MCF 10A (cell line): ENCODE measurements at regions of chr1 and their contacts with region 1.

Region 1: GRCh38 chr1:203906932-203907331 is 45.5 kb downstream of the SNRPE start:
- DNase-seq: peak; percentile 99
- H3K4me3 Mint-ChIP-seq: no peak overlapping the region
- H3K27ac Mint-ChIP-seq: peak overlapping the region; percentile 60
- H3K4me1 Mint-ChIP-seq: peaks cover 19% of the 10 kb centered on the region
- H3K27me3 Mint-ChIP-seq: no peaks in the 10 kb centered on the region
- CTCF ChIP-seq: no peak

Region 2: DNA sequence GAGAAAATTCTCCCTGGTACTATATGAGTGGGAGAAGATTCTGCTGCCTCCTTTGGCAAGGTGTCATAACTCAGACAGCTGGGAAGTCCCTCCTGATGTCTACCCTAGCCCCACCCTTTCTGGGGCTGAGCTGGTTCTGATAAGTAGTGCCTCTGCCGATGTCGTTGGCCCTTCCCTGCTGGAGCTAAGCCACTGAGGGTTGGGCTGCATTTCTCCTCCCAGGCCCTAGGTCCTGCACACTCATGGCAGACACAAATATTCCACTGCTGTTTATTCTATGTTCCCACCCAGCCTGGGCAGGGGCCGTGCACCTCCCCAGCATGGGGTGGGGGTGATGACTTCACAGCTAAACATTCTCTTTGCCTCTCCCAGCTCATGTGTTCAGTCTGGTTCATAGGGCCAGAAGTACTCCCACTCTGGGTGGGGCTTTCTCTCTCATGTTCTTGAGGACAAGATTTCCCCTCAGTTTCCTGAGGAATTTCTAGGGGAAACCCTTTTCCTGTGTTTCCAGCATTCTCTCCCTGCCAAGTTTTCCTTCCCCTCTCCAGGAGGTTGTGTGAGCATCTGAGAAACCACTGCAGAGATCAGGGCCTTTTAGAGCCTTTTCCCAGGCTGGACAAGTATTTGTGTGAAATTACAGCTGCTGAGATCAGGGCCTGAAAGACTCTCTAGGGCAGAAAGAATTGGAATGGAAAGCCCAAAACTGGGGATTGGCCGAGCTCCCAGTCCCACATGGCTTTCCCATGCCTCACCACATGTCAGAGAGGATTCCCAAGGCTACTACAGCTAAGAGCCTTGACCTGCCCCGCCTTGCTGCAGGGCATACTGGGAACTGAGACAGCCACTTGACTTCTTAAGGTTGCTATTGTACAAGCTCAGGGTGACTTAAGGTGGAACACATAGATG is 214.1 kb before region 1 on chr1:
- CTCF ChIA-PET with region 1: no interaction called
- POLR2A ChIA-PET with region 1: no interaction called
- intact Hi-C with region 1: no loop called
- DNase-seq: peak; percentile 99
- H3K4me3 Mint-ChIP-seq: peak overlapping the region; percentile 61
- H3K27ac Mint-ChIP-seq: peak overlapping the region; percentile 96
- H3K4me1 Mint-ChIP-seq: peaks cover 37% of the 10 kb centered on the region
- H3K27me3 Mint-ChIP-seq: no peaks in the 10 kb centered on the region
- CTCF ChIP-seq: no peak

Region 3: GRCh38 chr1:203926025-203926540 is 19.2 kb after region 1 on chr1:
- CTCF ChIA-PET with region 1: interaction called, 4 read pairs
- POLR2A ChIA-PET with region 1: interaction called, 5 read pairs
- intact Hi-C with region 1: loop called (anchors 1 kb)
- DNase-seq: peak; percentile 85
- H3K4me3 Mint-ChIP-seq: no peak overlapping the region
- H3K27ac Mint-ChIP-seq: peak overlapping the region; percentile 57
- H3K4me1 Mint-ChIP-seq: peaks cover 21% of the 10 kb centered on the region
- H3K27me3 Mint-ChIP-seq: no peaks in the 10 kb centered on the region
- CTCF ChIP-seq: no peak

Region 4: GRCh38 chr1:204045430-204045829 is 138.5 kb after region 1 on chr1:
- CTCF ChIA-PET with region 1: no interaction called
- POLR2A ChIA-PET with region 1: no interaction called
- intact Hi-C with region 1: no loop called
- DNase-seq: no peak
- H3K4me3 Mint-ChIP-seq: no peak overlapping the region
- H3K27ac Mint-ChIP-seq: no peak overlapping the region
- H3K4me1 Mint-ChIP-seq: no peaks in the 10 kb centered on the region
- H3K27me3 Mint-ChIP-seq: no peaks in the 10 kb centered on the region
- CTCF ChIP-seq: no peak